ENCODE measurements at regions of chr15 and their contacts with region 1.

Region 1: GRCh38 chr15:62561059-62561519 is 396.0 kb upstream of the C2CD4B start:
- DNase-seq: peak in 1 of 2 donors; percentile 23
- ATAC-seq: peak; percentile 34 to 77 (median 66)
- H3K4me3 ChIP-seq: peak overlapping the region in 9 of 10 donors; percentile 12 to 49 (median 43)
- H3K27ac ChIP-seq: peak overlapping the region in 8 of 10 donors; percentile 11 to 70 (median 56)
- H3K4me1 ChIP-seq: peaks cover 12 to 56% (median 20%) of the 10 kb centered on the region in 9 donors
- H3K27me3 ChIP-seq: no peaks in the 10 kb centered on the region
- CTCF ChIP-seq: no peak

Region 2: DNA sequence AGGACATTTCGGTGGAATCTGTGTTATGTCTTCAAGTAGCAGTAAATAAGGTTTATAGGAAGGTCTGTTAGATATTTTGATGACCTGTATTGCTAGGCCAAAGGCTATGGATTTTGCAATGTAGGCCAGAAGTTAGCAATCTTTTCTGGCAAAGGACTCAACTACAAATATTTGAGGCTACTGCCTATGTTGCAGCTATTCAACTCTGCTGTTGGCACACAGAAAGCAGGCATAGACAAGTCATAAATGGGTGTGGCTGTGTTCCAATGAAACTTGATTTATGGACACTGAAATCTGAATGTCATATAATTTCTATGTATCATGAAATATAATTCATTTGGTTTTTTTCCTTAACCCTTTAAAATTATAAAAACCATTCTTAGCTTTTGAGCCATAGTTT is 42.7 kb after region 1 on chr15:
- intact Hi-C with region 1: loop called in 1 of 10 experiments (anchors 5 kb)
- DNase-seq: no peak
- ATAC-seq: peak in 1 of 8 donors; percentile 38
- H3K4me3 ChIP-seq: no peak overlapping the region
- H3K27ac ChIP-seq: no peak overlapping the region
- H3K4me1 ChIP-seq: peaks cover 2 to 55% (median 23%) of the 10 kb centered on the region in 9 donors
- H3K27me3 ChIP-seq: no peaks in the 10 kb centered on the region
- CTCF ChIP-seq: no peak

Measured in heart right ventricle (tissue), 16 donors.